Calu3 (cell line): ENCODE measurements at regions of chr17 and their contacts with region 1.

Region 1: GRCh38 chr17:76014184-76014924 is 12.8 kb downstream of the EVPL start:
- DNase-seq: peak; percentile 82
- H3K4me3 Mint-ChIP-seq: no peak overlapping the region
- H3K27ac Mint-ChIP-seq: no peak overlapping the region
- H3K4me1 Mint-ChIP-seq: no peaks in the 10 kb centered on the region
- H3K27me3 Mint-ChIP-seq: no peaks in the 10 kb centered on the region
- CTCF ChIP-seq: peak; percentile 97

Region 2: GRCh38 chr17:76053246-76054116 is 39.1 kb after region 1 on chr17:
- CTCF ChIA-PET with region 1: interaction called, 14 read pairs
- intact Hi-C with region 1: loop called (anchors 1 kb)
- DNase-seq: peak; percentile 48
- H3K4me3 Mint-ChIP-seq: peak overlapping the region; percentile 68
- H3K27ac Mint-ChIP-seq: peak overlapping the region; percentile 98
- H3K4me1 Mint-ChIP-seq: peaks cover 75% of the 10 kb centered on the region
- H3K27me3 Mint-ChIP-seq: no peaks in the 10 kb centered on the region
- CTCF ChIP-seq: no peak